Mucosa of descending colon (tissue), 3 donors: ENCODE measurements at regions of chr12 and their contacts with region 1.

Region 1: DNA sequence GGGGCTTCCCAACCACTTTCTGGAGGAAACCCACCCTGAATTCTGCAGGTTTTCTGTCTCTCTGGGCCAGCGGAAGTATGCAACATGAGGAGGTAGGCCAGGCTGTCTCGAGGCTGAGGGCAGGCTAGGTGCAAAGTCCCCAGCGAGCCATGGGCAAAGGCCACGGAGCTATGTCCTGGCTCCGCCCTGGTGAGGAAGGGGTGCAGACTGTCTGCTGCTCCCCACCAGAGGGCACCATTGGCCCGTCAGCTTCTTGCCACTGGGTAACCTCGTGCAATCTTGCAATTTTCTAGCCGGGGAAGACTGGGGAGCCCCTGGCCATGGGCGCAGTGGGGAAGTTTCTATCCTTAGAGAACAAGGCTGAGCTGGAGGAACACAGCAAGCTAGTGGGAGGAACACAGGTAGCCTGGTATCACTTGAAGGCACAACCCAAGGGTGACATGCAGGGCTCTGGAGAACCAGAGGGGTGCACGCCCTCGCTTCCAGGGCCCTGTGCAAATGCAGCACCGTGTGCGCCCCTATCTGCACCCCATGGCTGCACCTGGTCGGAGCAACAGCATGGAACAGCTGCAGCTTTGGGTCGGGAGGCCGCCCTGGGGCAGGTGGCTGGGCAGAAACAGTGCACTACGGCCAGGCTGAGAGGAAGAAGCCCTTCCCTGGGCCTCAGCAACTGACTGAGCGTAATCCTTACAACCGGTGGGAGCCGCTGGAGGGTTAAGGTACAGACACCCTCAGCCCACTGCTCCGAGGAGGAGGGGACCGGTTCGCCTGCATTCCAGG is 27.6 kb upstream of the RPLP0 start:
- DNase-seq: peak; percentile 93 to 96 (median 93)
- ATAC-seq: peak; percentile 64
- H3K4me3 ChIP-seq: no peak overlapping the region
- H3K4me1 ChIP-seq: peaks cover 62% of the 10 kb centered on the region
- CTCF ChIP-seq: peak; percentile 89

Region 2: GRCh38 chr12:120265473-120266179 is 37.1 kb after region 1 on chr12 and contains the start of gene PXN:
- intact Hi-C with region 1: loop called (anchors 2 to 5 kb)
- DNase-seq: peak; percentile 91 to 94 (median 92)
- ATAC-seq: peak; percentile 94
- H3K4me3 ChIP-seq: peak within 1 kb of the TSS; percentile 50
- H3K4me1 ChIP-seq: peaks cover 33% of the 10 kb centered on the region
- CTCF ChIP-seq: peak; percentile 76
- total RNA-seq, gene PXN: 117 to 167 (median 146) TPM